Aorta (tissue), 5 donors: ENCODE measurements at regions of chr18 and their contacts with region 1.

Region 1: GRCh38 chr18:9771261-9771976 is 63.3 kb downstream of the RAB31 start:
- DNase-seq: peak; percentile 91 to 96
- ATAC-seq: peak; percentile 94
- H3K4me3 ChIP-seq: no peak overlapping the region
- H3K27ac ChIP-seq: no peak overlapping the region
- H3K4me1 ChIP-seq: peaks cover 0 to 4% of the 10 kb centered on the region in 2 donors
- H3K27me3 ChIP-seq: no peaks in the 10 kb centered on the region

Region 2: DNA sequence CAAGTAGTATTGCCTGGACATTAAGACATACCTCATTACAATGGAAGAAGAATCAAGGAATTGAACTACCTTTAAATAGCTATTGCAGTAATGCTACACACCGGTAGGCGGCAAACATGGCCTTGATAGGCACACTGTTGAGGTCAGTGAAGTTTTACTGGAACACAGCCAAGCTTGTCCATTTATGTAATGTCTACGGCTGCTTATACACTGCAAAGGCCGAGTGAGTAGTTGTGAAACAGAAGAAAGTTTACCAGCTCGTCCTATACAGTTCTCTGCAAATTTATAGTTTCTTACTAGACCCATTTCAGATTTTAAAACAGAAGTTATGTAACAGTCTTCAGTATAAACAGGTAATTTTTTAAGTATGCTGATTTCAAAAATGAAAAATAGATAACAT is 195.9 kb before region 1 on chr18:
- intact Hi-C with region 1: loop called in 1 of 2 experiments (anchors 10 kb)
- DNase-seq: peak; percentile 70 to 80
- ATAC-seq: peak; percentile 90
- H3K4me3 ChIP-seq: no peak overlapping the region
- H3K27ac ChIP-seq: no peak overlapping the region
- H3K4me1 ChIP-seq: no peaks in the 10 kb centered on the region
- H3K27me3 ChIP-seq: no peaks in the 10 kb centered on the region

Region 3: DNA sequence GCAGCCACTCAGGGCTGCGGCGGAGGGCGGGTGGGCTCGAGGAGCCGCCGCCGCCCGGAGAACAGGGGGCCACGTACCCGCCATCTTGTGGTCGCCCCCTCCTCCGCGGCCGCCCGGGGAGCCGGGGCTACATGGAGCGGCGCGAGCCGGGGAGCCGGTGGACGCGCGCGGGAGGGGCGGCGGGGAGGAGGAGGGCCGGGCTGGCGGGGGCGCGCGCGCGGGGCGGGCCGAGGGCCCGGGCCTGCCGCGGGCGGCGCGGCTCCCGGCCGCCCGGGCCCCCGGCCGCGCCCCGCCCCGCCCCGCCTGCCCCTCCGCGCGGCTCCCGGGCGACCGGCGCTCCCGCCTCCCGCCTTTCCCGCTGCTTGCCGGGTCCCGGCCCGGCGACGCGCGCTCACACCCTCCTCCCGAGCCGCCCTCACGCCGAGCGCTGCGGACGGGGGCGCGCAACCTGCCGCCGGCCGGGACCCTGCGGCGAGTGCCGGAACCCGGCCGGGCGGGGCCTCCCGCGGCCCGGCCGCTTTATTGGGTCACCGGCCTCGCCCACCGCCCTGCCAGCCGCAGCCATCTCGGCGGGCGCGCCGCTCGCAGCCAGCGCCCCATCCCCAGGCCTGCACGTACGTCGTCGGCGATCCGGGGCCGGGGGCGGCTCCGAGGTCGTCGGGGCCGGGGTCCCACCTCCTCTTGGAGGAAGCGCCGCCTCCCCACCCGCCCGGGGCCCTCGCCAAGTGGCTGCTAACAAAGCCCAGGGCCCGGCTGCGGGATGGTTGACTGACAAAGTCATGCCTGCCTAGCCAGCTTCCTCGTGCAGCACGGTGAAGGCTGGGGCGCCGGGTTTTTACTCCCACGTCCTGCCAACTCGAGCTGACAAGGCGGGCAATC is 156.8 kb before region 1 on chr18 and contains the start of gene PPP4R1:
- intact Hi-C with region 1: loop called in 1 of 2 experiments (anchors 10 kb)
- DNase-seq: peak; percentile 88 to 92
- ATAC-seq: peak; percentile 89
- H3K4me3 ChIP-seq: peak within 1 kb of the TSS; percentile 77 to 100
- H3K27ac ChIP-seq: peak within 1 kb of the TSS; percentile 97 to 99
- H3K4me1 ChIP-seq: peaks cover 2 to 9% of the 10 kb centered on the region in 2 donors
- H3K27me3 ChIP-seq: no peaks in the 10 kb centered on the region
- total RNA-seq, gene PPP4R1: 119 to 121 TPM

Region 4: GRCh38 chr18:9683407-9684396 is 87.7 kb before region 1 on chr18:
- intact Hi-C with region 1: loop called in 1 of 2 experiments (anchors 5 kb)
- DNase-seq: peak in 1 of 2 donors; percentile 58
- ATAC-seq: peak; percentile 81
- H3K4me3 ChIP-seq: no peak overlapping the region
- H3K27ac ChIP-seq: peak overlapping the region; percentile 59 to 85
- H3K4me1 ChIP-seq: peaks cover 0 to 3% of the 10 kb centered on the region in 2 donors
- H3K27me3 ChIP-seq: no peaks in the 10 kb centered on the region

Region 5: GRCh38 chr18:9708057-9708433 is 63.4 kb before region 1 on chr18 and contains the start of gene RAB31:
- intact Hi-C with region 1: no loop called
- DNase-seq: peak; percentile 93 to 96
- ATAC-seq: peak; percentile 94
- H3K4me3 ChIP-seq: peak within 1 kb of the TSS; percentile 80 to 94
- H3K27ac ChIP-seq: peak within 1 kb of the TSS; percentile 74 to 92
- H3K4me1 ChIP-seq: peaks cover 0 to 3% of the 10 kb centered on the region in 2 donors
- H3K27me3 ChIP-seq: no peaks in the 10 kb centered on the region
- total RNA-seq, gene RAB31: 107 to 145 TPM

Region 6: DNA sequence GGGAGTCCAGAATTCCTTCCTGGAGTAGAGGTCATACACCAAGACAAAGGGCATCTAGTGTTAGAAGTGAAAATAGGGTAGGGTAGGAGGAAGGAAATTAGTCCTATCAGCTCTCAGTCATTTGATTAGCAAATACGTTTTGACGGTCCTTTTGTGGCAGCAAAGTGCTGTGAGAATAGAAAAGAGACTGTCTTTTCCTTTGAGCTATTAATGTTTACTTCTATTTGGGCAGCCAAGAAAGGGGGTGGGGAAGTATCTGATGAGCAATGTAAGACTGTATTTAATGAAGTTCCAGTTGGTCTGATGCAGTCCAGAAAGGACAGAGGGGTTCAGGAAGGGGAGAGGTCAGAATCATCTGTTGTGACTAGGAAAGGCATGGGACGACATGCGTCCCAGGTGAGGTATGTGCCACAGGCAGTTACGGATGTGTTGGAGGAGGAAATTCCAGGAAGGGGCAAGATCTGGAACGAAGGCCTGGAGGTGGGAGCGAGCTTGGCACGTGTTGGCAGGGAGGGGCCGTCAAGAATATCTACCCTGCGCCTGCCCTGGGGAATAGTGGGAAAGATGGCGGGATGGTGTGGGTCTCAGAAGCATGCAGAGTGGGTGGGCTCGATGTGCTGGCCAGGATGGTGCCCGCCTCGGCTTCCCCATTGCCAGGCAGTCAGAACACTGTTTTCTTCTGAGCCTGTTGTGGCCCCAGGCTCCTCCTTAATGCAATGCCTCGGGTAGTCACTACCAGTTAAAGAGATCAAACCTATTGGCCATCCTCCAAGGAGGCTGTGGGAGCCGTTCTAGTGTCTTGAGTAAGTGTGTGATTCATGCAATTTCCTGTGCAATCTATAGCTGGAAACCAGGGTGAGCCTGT is 56.5 kb after region 1 on chr18:
- intact Hi-C with region 1: loop called in 1 of 2 experiments (anchors 2 kb)
- DNase-seq: peak in 1 of 2 donors; percentile 78
- ATAC-seq: no peak
- H3K4me3 ChIP-seq: no peak overlapping the region
- H3K27ac ChIP-seq: no peak overlapping the region
- H3K4me1 ChIP-seq: peaks cover 4 to 14% of the 10 kb centered on the region in 2 donors
- H3K27me3 ChIP-seq: no peaks in the 10 kb centered on the region